PC-9 (cell line): ENCODE measurements at regions of chr2 and their contacts with region 1.

Region 1: DNA sequence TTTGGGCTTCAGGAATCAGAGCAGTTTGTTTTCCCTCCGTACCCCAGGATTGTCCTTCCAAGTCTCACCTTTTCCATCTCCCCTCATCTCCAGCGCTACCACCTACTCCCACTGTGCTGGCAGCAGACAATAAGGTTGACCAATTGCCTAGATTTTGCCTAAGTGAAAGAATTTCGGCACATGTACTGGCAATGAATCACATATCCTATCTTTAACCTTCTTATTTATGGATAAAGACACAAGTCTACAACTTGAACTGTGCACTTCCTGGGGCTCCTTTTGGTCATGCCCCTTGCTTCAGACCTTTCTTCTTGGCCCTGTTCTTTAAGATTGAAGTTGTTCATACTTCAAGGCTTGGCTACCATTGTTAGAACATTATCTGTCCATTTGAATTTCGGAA is 71.4 kb downstream of the KCMF1 start:
- DNase-seq: no peak
- H3K4me3 ChIP-seq: no peak overlapping the region
- H3K27ac ChIP-seq: no peak overlapping the region
- H3K4me1 ChIP-seq: no peaks in the 10 kb centered on the region
- H3K27me3 ChIP-seq: no peaks in the 10 kb centered on the region
- CTCF ChIP-seq: no peak

Region 2: GRCh38 chr2:84579661-84580060 is 462.7 kb before region 1 on chr2:
- CTCF ChIA-PET with region 1: no interaction called
- POLR2A ChIA-PET with region 1: no interaction called
- intact Hi-C with region 1: no loop called
- DNase-seq: no peak
- H3K4me3 ChIP-seq: no peak overlapping the region
- H3K27ac ChIP-seq: no peak overlapping the region
- H3K4me1 ChIP-seq: no peaks in the 10 kb centered on the region
- H3K27me3 ChIP-seq: peaks cover 22% of the 10 kb centered on the region; the same call in 1 of the 2 replicates
- CTCF ChIP-seq: no peak

Region 3: GRCh38 chr2:85017411-85018048 is 24.8 kb before region 1 on chr2:
- CTCF ChIA-PET with region 1: interaction called, 15 read pairs
- POLR2A ChIA-PET with region 1: no interaction called
- intact Hi-C with region 1: no loop called
- DNase-seq: no peak
- H3K4me3 ChIP-seq: no peak overlapping the region
- H3K27ac ChIP-seq: peak overlapping the region; percentile 73; the same call in 1 of the 2 replicates
- H3K4me1 ChIP-seq: peaks cover 35% of the 10 kb centered on the region
- H3K27me3 ChIP-seq: no peaks in the 10 kb centered on the region
- CTCF ChIP-seq: peak; percentile 66